Mammary epithelial cell (primary cell): ENCODE measurements at regions of chr14 and their contacts with region 1.

Region 1: GRCh38 chr14:19895282-19895681 is 20.3 kb downstream of the OR4K2 start:
- DNase-seq: no peak
- H3K4me3 ChIP-seq: no peak overlapping the region
- H3K27ac ChIP-seq: no peak overlapping the region
- H3K4me1 ChIP-seq: no peaks in the 10 kb centered on the region
- H3K27me3 ChIP-seq: no peaks in the 10 kb centered on the region
- CTCF ChIP-seq: no peak

Region 2: GRCh38 chr14:19920021-19920657 is 24.9 kb after region 1 on chr14 and contains the start of gene OR4K5:
- CTCF ChIA-PET with region 1: interaction called, 11 read pairs
- dilution Hi-C with region 1: no loop called
- in situ Hi-C with region 1: no loop called
- intact Hi-C with region 1: no loop called
- DNase-seq: no peak
- H3K4me3 ChIP-seq: no peak within 1 kb of the TSS
- H3K27ac ChIP-seq: no peak within 1 kb of the TSS
- H3K4me1 ChIP-seq: no peaks in the 10 kb centered on the region
- H3K27me3 ChIP-seq: no peaks in the 10 kb centered on the region
- CTCF ChIP-seq: no peak
- total RNA-seq, gene OR4K5: not detected